PC-9 (cell line): ENCODE measurements at regions of chr2 and their contacts with region 1.

Region 1: DNA sequence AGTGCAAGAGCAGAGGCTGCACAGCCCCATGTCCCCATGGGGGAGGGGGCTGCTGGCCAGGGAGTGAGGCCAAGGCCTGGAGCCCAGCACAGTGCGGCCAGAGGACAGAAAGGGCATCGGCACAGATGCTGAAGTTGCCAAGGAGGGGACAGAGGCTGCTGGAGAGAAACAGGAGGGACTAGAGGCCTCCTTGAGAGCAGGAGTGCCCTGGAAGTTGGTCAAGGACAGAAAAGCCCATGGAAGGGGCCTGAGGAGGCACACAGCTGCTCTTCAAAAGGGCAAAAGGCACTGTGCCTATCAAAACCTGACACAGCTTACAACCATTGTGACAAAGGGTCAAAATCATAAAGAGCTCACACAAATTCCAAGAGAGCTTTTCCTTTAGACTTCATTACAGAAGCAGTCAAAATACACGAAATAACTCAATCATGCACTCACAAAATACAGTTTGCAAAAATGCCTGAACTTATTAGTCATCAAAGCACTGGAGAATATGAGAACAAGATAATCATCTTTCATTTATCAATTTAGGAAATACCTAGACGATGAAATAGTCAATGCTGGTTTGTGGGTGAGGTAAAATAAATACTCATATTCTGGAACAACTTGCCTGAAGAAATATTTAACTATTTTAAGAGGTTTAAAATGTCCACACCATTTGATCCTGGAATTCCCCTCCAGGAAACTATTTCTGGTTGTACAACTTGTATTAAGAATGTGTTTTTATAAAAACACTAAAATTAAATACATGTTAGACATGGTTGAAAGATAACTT is 79.6 kb downstream of the USP40 start:
- DNase-seq: peak; percentile 63 to 100
- H3K4me3 ChIP-seq: 0 out of 2 replicates have a peak overlapping the region, but pooled peaks have one; percentile 1
- H3K27ac ChIP-seq: peak overlapping the region; percentile 93
- H3K4me1 ChIP-seq: peaks cover 61% of the 10 kb centered on the region
- H3K27me3 ChIP-seq: no peaks in the 10 kb centered on the region
- CTCF ChIP-seq: no peak

Region 2: GRCh38 chr2:233418761-233419625 is 68.0 kb before region 1 on chr2:
- CTCF ChIA-PET with region 1: no interaction called
- POLR2A ChIA-PET with region 1: interaction called, 21 read pairs
- intact Hi-C with region 1: loop called (anchors 2 kb)
- DNase-seq: no peak
- H3K4me3 ChIP-seq: no peak overlapping the region
- H3K27ac ChIP-seq: no peak overlapping the region
- H3K4me1 ChIP-seq: peaks cover 57% of the 10 kb centered on the region
- H3K27me3 ChIP-seq: no peaks in the 10 kb centered on the region
- CTCF ChIP-seq: no peak

Region 3: GRCh38 chr2:233566141-233566960 is 79.4 kb after region 1 on chr2 and contains the start of gene USP40:
- CTCF ChIA-PET with region 1: no interaction called
- POLR2A ChIA-PET with region 1: no interaction called
- intact Hi-C with region 1: loop called (anchors 1 kb)
- DNase-seq: peak; percentile 89 to 93
- H3K4me3 ChIP-seq: peak within 1 kb of the TSS; percentile 91
- H3K27ac ChIP-seq: peak within 1 kb of the TSS; percentile 88
- H3K4me1 ChIP-seq: peaks cover 18% of the 10 kb centered on the region
- H3K27me3 ChIP-seq: no peaks in the 10 kb centered on the region
- CTCF ChIP-seq: no peak
- total RNA-seq, gene USP40: 116 and 127 TPM in 2 replicates

Region 4: DNA sequence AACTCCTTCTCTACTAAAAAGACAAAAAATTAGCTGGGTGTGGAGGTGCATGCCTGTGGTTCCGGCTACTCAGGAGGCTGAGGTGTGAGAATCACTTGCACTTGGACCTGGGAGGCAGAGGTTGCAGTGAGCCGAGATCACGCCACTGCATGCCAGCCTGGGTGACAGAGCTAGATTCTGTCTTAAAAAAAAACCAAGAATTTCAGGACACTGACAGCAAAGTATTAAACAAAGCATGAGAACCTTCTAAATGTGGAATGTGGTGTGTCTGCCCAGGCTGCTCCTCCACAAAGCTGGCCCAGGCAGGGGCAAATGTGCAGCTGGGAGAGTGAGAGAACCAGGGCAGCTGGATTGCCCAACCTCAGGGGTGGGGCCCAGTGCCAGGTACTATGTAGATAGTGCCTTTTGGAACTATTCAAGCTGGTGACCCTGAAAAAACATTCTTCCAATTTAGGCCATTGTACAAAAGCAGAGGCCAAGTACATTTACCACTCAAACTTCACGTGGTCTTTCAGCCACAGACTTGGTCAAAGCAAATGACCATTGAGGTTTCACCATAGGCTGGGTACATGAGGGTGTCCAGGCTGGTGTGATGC is 219.0 kb after region 1 on chr2:
- CTCF ChIA-PET with region 1: no interaction called
- POLR2A ChIA-PET with region 1: interaction called, 19 read pairs
- intact Hi-C with region 1: loop called (anchors 1 kb)
- DNase-seq: peak; percentile 97
- H3K4me3 ChIP-seq: peak overlapping the region; percentile 15; the same call in 1 of the 2 replicates
- H3K27ac ChIP-seq: peak overlapping the region; percentile 95
- H3K4me1 ChIP-seq: peaks cover 97% of the 10 kb centered on the region
- H3K27me3 ChIP-seq: no peaks in the 10 kb centered on the region
- CTCF ChIP-seq: no peak

Region 5: GRCh38 chr2:233953087-233953801 is 466.3 kb after region 1 on chr2:
- CTCF ChIA-PET with region 1: no interaction called
- POLR2A ChIA-PET with region 1: no interaction called
- intact Hi-C with region 1: no loop called
- DNase-seq: no peak
- H3K4me3 ChIP-seq: no peak overlapping the region
- H3K27ac ChIP-seq: no peak overlapping the region
- H3K4me1 ChIP-seq: no peaks in the 10 kb centered on the region
- H3K27me3 ChIP-seq: peaks cover 4% of the 10 kb centered on the region; the same call in 1 of the 2 replicates
- CTCF ChIP-seq: no peak